Caco-2 (cell line): ENCODE measurements at regions of chr2 and their contacts with region 1.

Region 1: GRCh38 chr2:11154923-11155380 is 315 bp upstream of the SLC66A3 start:
- DNase-seq: peak; percentile 99
- H3K4me3 ChIP-seq: peak overlapping the region; percentile 34
- H3K4me3 Mint-ChIP-seq: peak overlapping the region; percentile 55
- H3K27ac Mint-ChIP-seq: peak overlapping the region; percentile 92
- H3K4me1 ChIP-seq: peaks cover 11% of the 10 kb centered on the region
- H3K4me1 Mint-ChIP-seq: no peaks in the 10 kb centered on the region
- H3K27me3 ChIP-seq: no peaks in the 10 kb centered on the region
- H3K27me3 Mint-ChIP-seq: no peaks in the 10 kb centered on the region
- CTCF ChIP-seq: no peak

Region 2: GRCh38 chr2:10963155-10963554 is 191.8 kb before region 1 on chr2:
- CTCF ChIA-PET with region 1: no interaction called
- POLR2A ChIA-PET with region 1: no interaction called
- intact Hi-C with region 1: no loop called
- DNase-seq: no peak
- H3K4me3 ChIP-seq: no peak overlapping the region
- H3K4me3 Mint-ChIP-seq: no peak overlapping the region
- H3K27ac Mint-ChIP-seq: no peak overlapping the region
- H3K4me1 ChIP-seq: no peaks in the 10 kb centered on the region
- H3K4me1 Mint-ChIP-seq: no peaks in the 10 kb centered on the region
- H3K27me3 ChIP-seq: peaks cover 4% of the 10 kb centered on the region; the same call in 1 of the 2 replicates
- H3K27me3 Mint-ChIP-seq: peaks cover 17% of the 10 kb centered on the region
- CTCF ChIP-seq: no peak

Region 3: GRCh38 chr2:12389344-12390045 is 1234.5 kb after region 1 on chr2:
- CTCF ChIA-PET with region 1: no interaction called
- POLR2A ChIA-PET with region 1: no interaction called
- intact Hi-C with region 1: loop called (anchors 5 kb)
- DNase-seq: no peak
- H3K4me3 ChIP-seq: no peak overlapping the region
- H3K4me3 Mint-ChIP-seq: no peak overlapping the region
- H3K27ac Mint-ChIP-seq: no peak overlapping the region
- H3K4me1 ChIP-seq: peaks cover 6% of the 10 kb centered on the region; the same call in 1 of the 2 replicates
- H3K4me1 Mint-ChIP-seq: no peaks in the 10 kb centered on the region
- H3K27me3 ChIP-seq: no peaks in the 10 kb centered on the region
- H3K27me3 Mint-ChIP-seq: peaks cover 6% of the 10 kb centered on the region
- CTCF ChIP-seq: no peak